Mammary epithelial cell (primary cell): ENCODE measurements at regions of chr10 and their contacts with region 1.

Region 1: GRCh38 chr10:102678842-102679289 is 34.6 kb downstream of the TRIM8 start:
- DNase-seq: peak; percentile 48
- H3K4me3 ChIP-seq: no peak overlapping the region
- H3K27ac ChIP-seq: no peak overlapping the region
- H3K4me1 ChIP-seq: peaks cover 30% of the 10 kb centered on the region
- H3K27me3 ChIP-seq: no peaks in the 10 kb centered on the region
- CTCF ChIP-seq: peak; percentile 45 to 79

Region 2: DNA sequence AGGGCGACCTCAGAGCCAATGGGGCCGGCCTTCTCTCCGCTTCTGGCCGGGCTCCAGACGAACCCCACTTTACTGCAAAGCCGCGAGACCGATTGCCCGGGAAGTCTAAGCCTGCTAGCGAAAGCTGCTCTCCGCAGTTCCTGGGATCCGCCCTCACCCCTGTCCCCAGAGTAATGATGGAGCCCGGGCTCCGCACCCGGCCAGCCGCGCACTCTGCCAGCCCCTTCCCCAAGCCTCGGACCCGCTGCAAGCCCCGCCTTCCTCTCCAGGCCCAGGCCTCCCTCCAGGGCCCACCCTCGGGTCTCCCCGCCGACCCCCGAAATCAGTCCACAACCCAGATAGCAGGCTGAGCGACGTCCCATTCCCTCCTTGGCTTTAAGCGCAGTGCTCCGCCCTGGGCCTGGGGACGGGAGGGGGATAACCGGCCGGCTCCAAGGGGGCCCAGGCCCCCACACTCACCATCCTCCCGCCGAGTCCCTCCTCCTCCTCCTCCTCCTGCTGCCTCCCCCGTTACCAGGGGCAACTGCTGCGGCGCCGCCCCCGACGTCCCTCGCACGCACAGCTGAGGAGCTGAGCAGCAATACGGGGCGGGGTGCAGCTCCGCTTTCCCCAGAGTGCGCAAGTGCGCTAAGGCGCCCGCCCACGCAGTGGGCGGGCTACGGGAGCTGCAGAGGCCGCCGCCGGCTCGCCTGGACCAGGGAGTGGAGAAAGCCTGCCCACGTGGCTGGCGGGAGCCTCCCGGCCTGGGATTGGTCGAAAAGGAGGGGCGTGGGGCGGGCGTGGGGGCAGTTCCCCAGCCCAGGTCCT is 35.2 kb after region 1 on chr10 and contains the start of gene ARL3:
- CTCF ChIA-PET with region 1: no interaction called
- dilution Hi-C with region 1: no loop called
- in situ Hi-C with region 1: loop called in 1 of 2 experiments (anchors 5 kb)
- intact Hi-C with region 1: loop called (anchors 1 kb)
- DNase-seq: peak; percentile 99
- H3K4me3 ChIP-seq: peak within 1 kb of the TSS; percentile 84 to 95 (median 89)
- H3K27ac ChIP-seq: peak within 1 kb of the TSS; percentile 82
- H3K4me1 ChIP-seq: peaks cover 15% of the 10 kb centered on the region
- H3K27me3 ChIP-seq: no peaks in the 10 kb centered on the region
- CTCF ChIP-seq: peak; percentile 48 to 57
- total RNA-seq, gene ARL3: 2.3 to 8.7 TPM